ENCODE measurements at regions of chr1 and their contacts with region 1.

Region 1: DNA sequence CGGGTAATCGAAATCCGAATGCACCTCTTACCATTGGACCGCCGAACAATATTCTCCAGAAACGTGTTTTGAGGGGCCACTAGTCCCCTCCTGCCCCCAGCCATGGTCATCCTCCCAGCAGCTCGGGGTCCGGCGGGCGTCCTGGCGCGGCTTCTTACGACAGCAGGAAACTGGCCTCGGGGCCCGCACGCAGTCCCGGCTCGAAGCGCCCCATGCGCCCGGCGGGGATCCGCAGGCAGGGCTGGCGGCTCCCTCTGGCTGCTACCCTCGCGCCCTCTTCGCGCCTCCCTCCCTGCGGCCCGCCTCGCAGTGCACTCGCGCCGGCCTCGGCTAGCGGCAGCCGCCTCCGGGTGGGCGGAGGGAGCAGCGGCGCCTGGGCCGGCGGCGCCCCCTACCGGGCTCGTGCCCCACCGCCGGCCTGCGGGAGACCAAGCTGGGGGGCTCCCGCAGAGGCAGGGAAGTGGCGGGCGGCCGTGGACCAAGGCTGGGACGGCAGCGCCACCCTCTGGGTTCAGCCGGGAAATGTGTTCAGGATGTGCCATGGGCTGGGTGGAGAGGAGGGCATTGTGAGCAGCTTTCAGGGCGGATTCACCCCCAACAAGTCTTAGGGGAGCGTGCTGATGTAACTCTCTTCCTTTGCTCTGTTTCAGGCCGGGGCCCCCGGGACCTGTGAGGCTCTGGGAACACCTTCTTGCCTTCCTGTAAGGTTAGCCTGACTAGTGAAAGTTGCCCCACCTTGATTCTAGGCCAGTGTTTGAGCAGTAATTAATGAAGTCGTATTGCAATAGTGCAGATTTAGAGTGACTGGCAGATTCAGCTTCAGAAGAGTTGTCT is at the start of gene KCNH1:
- DNase-seq: peak; percentile 72
- H3K4me3 ChIP-seq: peak within 1 kb of the TSS; percentile 35
- H3K27ac ChIP-seq: no peak within 1 kb of the TSS
- H3K4me1 ChIP-seq: peaks cover 4% of the 10 kb centered on the region
- H3K27me3 ChIP-seq: peaks cover 19% of the 10 kb centered on the region
- CTCF ChIP-seq: peak; percentile 79
- total RNA-seq, gene KCNH1: 0.40 to 0.64 TPM

Region 2: GRCh38 chr1:210407207-210407886 is 726.7 kb before region 1 on chr1:
- intact Hi-C with region 1: loop called (anchors 2 kb)
- DNase-seq: peak; percentile 70
- H3K4me3 ChIP-seq: no peak overlapping the region
- H3K27ac ChIP-seq: no peak overlapping the region
- H3K4me1 ChIP-seq: no peaks in the 10 kb centered on the region
- H3K27me3 ChIP-seq: no peaks in the 10 kb centered on the region
- CTCF ChIP-seq: peak; percentile 97

Region 3: DNA sequence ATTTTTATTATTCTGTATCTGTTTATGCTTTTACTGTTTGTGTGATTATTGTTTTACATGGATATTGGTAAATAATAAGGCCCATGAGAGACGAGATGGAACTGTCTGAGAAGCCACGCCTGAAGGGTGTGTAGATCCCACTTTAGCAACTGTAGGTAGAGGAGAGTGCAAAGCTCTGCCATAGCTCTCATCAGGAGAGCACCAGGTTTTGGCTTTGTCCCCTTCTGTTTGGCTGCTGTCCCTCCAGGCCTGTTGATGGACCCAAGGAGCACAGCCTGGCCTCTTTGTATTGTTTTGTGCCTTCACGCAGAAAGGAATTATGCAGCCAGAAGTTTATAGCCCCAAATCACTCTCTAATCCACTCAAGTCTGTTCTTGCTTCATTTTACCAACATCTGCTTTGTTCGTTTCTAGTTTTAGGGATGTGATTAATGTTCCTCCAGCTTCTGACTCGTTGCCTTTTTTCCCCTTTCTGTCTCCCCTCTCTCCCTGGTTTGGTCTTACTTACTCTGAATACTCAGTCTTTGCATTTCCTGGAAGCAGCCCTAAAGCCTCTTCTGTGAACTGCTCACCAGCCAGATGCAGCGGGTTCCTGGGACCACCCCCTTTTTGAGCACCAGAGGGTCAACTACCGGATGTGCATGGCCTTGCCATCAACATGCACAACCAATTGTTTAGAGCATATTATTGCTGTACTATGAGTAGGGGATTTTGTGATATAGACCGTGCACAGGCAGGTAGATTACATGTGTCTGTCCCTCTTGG is 678.0 kb before region 1 on chr1:
- intact Hi-C with region 1: loop called (anchors 10 kb)
- DNase-seq: no peak
- H3K4me3 ChIP-seq: no peak overlapping the region
- H3K27ac ChIP-seq: no peak overlapping the region
- H3K4me1 ChIP-seq: no peaks in the 10 kb centered on the region
- H3K27me3 ChIP-seq: no peaks in the 10 kb centered on the region
- CTCF ChIP-seq: no peak

Region 4: DNA sequence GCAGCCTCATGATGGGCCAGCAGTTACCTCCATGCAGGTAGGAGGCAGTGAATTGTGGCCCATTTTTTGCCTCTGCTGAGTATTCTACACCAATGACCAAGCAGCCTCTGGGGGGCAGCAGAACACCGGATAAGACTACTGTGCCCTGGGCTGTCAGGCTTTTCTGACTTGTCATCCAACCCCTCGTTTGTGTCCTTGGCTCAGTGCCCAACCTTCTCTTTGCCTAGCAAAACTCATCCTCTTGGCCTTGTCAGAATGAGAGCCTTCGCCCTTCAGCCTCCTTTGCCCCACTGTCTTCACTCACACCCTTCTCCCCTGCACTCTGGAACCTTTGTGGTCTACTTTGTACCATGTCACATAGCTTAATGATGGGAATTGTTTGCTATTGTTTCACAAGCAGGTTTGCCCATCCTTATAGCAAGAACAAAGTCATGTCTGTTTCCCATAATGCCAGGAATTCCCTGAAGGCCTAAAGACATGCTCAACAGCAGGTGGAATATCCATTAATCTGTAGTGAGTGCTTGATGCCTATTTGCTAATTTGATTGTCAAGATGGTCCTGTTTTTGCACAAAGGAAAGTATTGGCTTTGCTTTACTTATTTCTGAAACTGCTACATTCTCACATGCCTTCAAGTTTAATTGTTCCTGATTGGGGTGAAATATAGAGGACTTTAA is 549.5 kb before region 1 on chr1:
- intact Hi-C with region 1: loop called (anchors 2 kb)
- DNase-seq: peak; percentile 77
- H3K4me3 ChIP-seq: no peak overlapping the region
- H3K27ac ChIP-seq: no peak overlapping the region
- H3K4me1 ChIP-seq: no peaks in the 10 kb centered on the region
- H3K27me3 ChIP-seq: no peaks in the 10 kb centered on the region
- CTCF ChIP-seq: peak; percentile 50

Region 5: DNA sequence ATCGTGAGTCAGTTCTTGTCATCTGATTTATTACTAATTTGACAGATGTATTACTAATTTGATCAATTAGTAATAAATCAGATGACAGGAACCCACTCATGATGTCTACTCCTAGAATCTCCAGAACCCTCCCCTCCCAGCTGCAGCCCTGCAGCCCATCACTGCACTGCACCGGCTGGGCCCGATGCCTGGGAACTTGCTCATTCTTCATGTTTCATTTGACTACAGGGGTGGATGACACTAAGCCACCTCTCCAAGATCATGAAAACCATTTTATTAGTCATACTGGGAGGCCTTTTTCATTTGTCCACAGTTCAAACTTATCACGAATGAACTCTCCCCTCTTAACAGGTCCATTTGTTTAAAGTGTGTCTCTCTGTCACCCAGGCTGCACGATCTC is 41.1 kb before region 1 on chr1:
- intact Hi-C with region 1: no loop called
- DNase-seq: no peak
- H3K4me3 ChIP-seq: no peak overlapping the region
- H3K27ac ChIP-seq: no peak overlapping the region
- H3K4me1 ChIP-seq: no peaks in the 10 kb centered on the region
- H3K27me3 ChIP-seq: no peaks in the 10 kb centered on the region
- CTCF ChIP-seq: no peak

Region 6: GRCh38 chr1:211258756-211259637 is 124.9 kb after region 1 on chr1 and contains the start of gene RCOR3:
- intact Hi-C with region 1: loop called (anchors 10 kb)
- DNase-seq: peak; percentile 94
- H3K4me3 ChIP-seq: peak within 1 kb of the TSS; percentile 87
- H3K27ac ChIP-seq: peak within 1 kb of the TSS; percentile 97
- H3K4me1 ChIP-seq: peaks cover 6% of the 10 kb centered on the region
- H3K27me3 ChIP-seq: no peaks in the 10 kb centered on the region
- CTCF ChIP-seq: peak; percentile 54
- total RNA-seq, gene RCOR3: 34.7 to 37.8 TPM